Activated CD4-positive, alpha-beta T cell treated with anti-CD3 and anti-CD28 coated beads, Interleukin-2, amount 10 ng/mL, durations not matched to agents 7 days and 5 days (primary cell): ENCODE measurements at regions of chr17 and their contacts with region 1.

Region 1: DNA sequence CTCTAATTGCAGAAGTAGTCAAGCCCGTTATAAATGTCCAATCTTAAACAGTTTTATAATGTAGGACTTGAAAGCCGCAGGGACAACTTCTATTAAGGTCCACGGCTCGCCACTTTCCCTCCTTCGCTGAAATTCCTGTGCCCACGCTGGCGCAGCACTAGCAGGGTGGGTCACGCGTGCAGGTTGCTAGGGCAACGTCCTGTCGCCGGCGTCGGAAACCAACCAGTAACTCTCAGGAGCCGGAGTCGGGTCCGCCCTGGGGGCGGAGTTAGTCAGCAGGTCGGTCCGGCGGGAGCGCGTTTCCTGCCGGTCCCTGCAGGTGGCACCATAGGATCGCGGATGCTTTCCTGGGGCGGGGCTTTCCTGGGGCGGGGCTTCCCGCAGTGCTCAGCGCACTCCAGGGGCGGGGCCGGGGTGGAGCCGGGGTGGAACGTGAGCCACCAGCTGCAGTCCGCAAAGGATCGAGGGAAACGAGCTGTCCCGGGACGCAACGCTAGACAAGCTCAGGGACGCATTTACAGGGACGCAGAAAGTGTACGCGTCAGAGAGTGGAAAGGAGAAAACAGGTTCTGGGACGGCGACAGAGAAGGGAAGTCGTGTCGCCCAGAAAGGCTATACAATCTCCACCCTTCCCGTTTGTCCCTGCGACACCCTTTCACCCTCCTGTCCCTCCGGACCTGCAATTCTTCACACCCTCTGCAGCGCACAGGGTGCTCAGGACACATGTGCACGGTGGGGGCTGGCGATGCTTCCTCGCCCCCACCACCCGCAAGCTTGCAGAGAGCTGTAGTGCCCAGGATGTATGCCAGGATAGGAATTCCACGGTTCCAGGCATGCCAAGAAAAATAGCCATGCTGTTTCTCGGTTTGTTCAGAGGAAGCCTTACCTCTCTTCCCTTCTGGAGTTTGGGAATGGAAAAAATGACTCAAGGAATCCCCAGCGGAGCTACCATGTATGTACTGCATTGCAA is 12.4 kb downstream of the COPZ2 start:
- DNase-seq: peak; percentile 99
- H3K4me3 Mint-ChIP-seq: peak overlapping the region; percentile 80
- H3K27ac Mint-ChIP-seq: peak overlapping the region; percentile 87
- H3K4me1 Mint-ChIP-seq: peaks cover 38% of the 10 kb centered on the region
- H3K27me3 Mint-ChIP-seq: peaks cover 21% of the 10 kb centered on the region

Region 2: GRCh38 chr17:47850692-47851573 is 174.3 kb before region 1 on chr17 and contains the start of gene SP6:
- CTCF ChIA-PET with region 1: no interaction called
- POLR2A ChIA-PET with region 1: no interaction called
- DNase-seq: peak; percentile 49
- H3K4me3 Mint-ChIP-seq: peak within 1 kb of the TSS; percentile 15
- H3K27ac Mint-ChIP-seq: no peak within 1 kb of the TSS
- H3K4me1 Mint-ChIP-seq: peaks cover 20% of the 10 kb centered on the region
- H3K27me3 Mint-ChIP-seq: peaks cover 90% of the 10 kb centered on the region
- total RNA-seq, gene SP6: not detected

Region 3: DNA sequence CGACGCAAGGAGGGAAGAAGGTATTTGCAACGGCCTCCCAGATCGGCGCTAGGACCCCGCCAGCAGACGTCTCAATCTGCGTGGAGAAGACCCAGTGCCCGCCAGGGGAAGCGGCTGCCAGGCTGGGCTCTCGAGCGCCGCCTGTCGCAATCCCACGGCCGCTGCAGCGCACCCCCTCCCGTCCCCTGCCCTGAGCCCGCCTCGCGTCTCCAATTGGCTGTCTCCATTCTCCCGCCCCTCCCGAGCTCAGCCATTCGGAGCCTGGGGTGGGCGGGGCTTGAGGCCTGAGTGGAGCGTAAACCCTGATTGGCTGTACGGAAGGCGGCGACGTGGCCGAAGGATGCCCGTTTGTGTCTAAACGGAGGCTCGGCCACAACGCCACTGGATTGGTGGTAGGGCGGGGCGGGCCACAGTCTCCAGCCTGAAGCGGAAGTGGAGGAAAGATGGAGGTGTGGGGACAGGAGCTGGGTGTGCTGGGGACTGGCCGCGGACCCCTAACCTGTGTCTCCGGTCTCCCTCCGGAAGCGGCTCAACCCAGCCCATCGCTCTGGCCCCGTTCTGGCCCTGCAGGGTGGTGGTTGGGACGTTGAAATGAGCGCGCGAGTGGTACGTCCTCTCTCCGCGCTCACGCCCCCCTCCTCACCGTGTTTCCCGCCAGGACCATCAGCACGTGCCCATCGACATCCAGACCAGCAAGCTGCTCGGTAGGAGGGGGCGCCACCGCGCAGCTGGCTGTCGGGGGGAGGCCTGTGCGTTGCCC is 54.3 kb before region 1 on chr17 and contains the start of gene CDK5RAP3:
- CTCF ChIA-PET with region 1: interaction called, 10 read pairs
- POLR2A ChIA-PET with region 1: no interaction called
- DNase-seq: peak; percentile 100
- H3K4me3 Mint-ChIP-seq: peak within 1 kb of the TSS; percentile 94
- H3K27ac Mint-ChIP-seq: peak within 1 kb of the TSS; percentile 89
- H3K4me1 Mint-ChIP-seq: peaks cover 30% of the 10 kb centered on the region
- H3K27me3 Mint-ChIP-seq: peaks cover 2% of the 10 kb centered on the region
- total RNA-seq, gene CDK5RAP3: 212 to 213 TPM

Region 4: GRCh38 chr17:48011405-48012150 is 13.6 kb before region 1 on chr17:
- CTCF ChIA-PET with region 1: interaction called, 14 read pairs
- POLR2A ChIA-PET with region 1: interaction called, 3 read pairs
- DNase-seq: peak; percentile 73
- H3K4me3 Mint-ChIP-seq: peak overlapping the region; percentile 64
- H3K27ac Mint-ChIP-seq: peak overlapping the region; percentile 58
- H3K4me1 Mint-ChIP-seq: peaks cover 24% of the 10 kb centered on the region
- H3K27me3 Mint-ChIP-seq: peaks cover 46% of the 10 kb centered on the region

Region 5: GRCh38 chr17:48047741-48048383 is 22.6 kb after region 1 on chr17 and contains the start of gene NFE2L1:
- CTCF ChIA-PET with region 1: interaction called, 39 read pairs
- POLR2A ChIA-PET with region 1: interaction called, 6 read pairs
- DNase-seq: peak; percentile 99
- H3K4me3 Mint-ChIP-seq: peak within 1 kb of the TSS; percentile 97
- H3K27ac Mint-ChIP-seq: peak within 1 kb of the TSS; percentile 94
- H3K4me1 Mint-ChIP-seq: peaks cover 57% of the 10 kb centered on the region
- H3K27me3 Mint-ChIP-seq: no peaks in the 10 kb centered on the region
- total RNA-seq, gene NFE2L1: 53.2 to 65.9 TPM

Region 6: GRCh38 chr17:48593840-48594537 is 568.8 kb after region 1 on chr17:
- CTCF ChIA-PET with region 1: interaction called, 12 read pairs
- POLR2A ChIA-PET with region 1: no interaction called
- DNase-seq: peak; percentile 78
- H3K4me3 Mint-ChIP-seq: peak overlapping the region; percentile 65
- H3K27ac Mint-ChIP-seq: no peak overlapping the region
- H3K4me1 Mint-ChIP-seq: peaks cover 59% of the 10 kb centered on the region
- H3K27me3 Mint-ChIP-seq: peaks cover 91% of the 10 kb centered on the region